ENCODE measurements at regions of chr17 and their contacts with region 1.

Region 1: DNA sequence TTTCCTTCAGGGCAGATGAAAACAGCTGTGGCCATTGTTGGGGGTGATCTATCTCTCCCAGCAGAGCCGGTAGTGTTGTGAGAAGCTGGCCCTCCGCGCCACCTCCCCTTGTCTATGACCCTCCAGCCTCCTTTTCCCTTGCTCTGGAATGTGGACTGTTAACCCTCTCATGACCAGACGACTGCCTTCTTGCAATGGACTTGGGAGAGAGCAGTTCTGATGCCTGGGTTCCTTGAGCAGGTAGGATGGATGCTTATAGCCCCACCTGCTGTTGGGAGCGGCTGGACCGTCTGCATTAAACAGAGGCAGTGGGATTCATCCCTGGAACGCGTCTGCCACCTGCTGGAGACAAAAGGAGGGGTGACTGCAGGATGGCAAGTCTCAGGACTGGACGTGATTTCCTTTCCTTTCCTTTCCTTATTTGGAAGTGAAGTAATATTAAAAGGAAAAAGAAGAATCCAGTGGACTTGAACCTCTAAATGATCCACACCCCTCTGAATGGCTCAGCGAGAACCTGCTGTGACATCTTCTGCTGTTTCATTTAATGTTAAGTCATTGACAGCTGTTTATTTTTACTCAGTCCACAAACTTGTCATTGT is 1.8 kb upstream of the SOST start:
- DNase-seq: peak; percentile 92
- H3K4me3 Mint-ChIP-seq: no peak overlapping the region
- H3K27ac Mint-ChIP-seq: no peak overlapping the region
- H3K4me1 Mint-ChIP-seq: peaks cover 1% of the 10 kb centered on the region
- H3K27me3 Mint-ChIP-seq: peaks cover 32% of the 10 kb centered on the region

Region 2: DNA sequence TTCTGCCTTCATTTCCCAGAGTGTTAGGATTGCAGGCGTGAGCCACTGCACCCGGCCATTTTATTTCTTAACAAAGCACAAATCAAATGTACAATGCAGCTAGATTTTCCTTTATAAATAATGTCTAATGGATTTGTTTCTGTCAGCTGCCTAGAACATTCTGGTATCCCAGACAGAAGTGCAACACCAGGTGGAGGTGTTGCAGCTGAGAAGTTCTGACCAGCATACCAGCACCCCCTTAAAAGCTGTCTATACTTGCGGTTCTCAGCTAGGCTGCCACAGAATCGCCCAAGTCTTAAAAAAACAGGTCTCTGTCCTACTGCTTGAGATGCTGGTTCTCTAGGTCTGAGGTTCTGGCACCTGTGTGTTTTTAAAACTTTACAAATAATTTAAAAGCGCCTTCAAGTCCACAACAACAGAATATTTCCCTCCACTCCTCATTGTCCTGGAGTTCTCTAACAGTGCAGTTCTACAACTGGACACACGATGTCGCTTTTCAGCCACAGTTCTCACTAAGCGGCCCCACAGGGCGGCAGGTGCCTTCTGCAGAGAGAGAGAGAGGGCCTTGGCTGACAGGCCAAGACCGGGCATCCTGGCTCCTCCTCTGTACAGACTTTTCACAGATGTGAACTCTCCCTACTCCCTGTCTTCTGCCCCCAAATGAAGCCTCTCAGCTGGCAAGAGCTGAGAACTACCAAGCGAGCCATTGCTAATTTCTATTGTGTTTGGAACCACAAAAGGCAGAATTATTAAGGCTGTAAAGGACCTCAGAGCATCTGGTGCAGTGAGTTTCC is 66.1 kb before region 1 on chr17:
- CTCF ChIA-PET with region 1: interaction called, 365 read pairs
- POLR2A ChIA-PET with region 1: interaction called, 11 read pairs
- DNase-seq: peak; percentile 79
- H3K4me3 Mint-ChIP-seq: no peak overlapping the region
- H3K27ac Mint-ChIP-seq: no peak overlapping the region
- H3K4me1 Mint-ChIP-seq: peaks cover 5% of the 10 kb centered on the region
- H3K27me3 Mint-ChIP-seq: peaks cover 12% of the 10 kb centered on the region

Region 3: DNA sequence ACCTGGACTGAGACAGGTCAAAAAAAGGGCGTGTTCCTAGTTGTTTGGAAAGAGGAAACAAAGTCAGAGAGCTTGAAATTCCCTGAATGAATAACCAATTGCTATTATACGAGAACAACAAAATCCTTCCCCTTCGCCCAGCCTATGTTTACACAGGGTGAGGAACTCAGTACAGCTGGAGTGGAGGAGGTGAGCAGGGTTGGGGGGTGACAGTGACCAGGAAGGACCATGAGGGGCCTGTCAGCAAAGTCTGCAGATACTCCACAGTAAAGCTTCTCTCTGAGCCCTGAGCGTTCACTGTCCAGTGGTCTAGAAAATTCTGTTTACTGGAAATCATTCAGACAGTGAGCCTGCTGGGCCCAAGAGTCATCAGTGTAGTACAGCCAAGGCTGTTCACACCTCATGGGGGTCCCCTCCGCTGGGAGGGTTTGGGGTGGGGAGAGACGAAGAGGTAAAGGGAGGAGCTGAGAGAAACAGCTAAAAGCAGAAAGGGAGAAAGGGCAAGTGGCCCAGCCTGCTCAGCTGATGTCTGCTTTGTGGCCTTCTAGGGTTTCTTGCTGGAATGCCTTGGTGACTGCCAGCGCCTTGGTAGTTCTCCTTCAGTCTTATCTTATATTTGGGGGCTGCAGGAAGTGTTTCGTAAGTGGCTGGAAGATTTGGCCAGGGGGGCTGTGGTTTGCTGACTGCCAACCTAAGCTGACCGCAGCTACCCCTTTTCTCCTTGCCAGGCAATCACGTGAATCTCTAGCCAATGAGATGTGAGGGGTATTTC is 12.7 kb after region 1 on chr17:
- CTCF ChIA-PET with region 1: interaction called, 22 read pairs
- POLR2A ChIA-PET with region 1: no interaction called
- DNase-seq: no peak
- H3K4me3 Mint-ChIP-seq: no peak overlapping the region
- H3K27ac Mint-ChIP-seq: no peak overlapping the region
- H3K4me1 Mint-ChIP-seq: peaks cover 2% of the 10 kb centered on the region
- H3K27me3 Mint-ChIP-seq: no peaks in the 10 kb centered on the region

Region 4: GRCh38 chr17:43832976-43833829 is 72.8 kb after region 1 on chr17 and contains the start of gene MPP3:
- CTCF ChIA-PET with region 1: no interaction called
- POLR2A ChIA-PET with region 1: no interaction called
- DNase-seq: peak; percentile 47
- H3K4me3 Mint-ChIP-seq: peak within 1 kb of the TSS; percentile 51
- H3K27ac Mint-ChIP-seq: no peak within 1 kb of the TSS
- H3K4me1 Mint-ChIP-seq: peaks cover 11% of the 10 kb centered on the region
- H3K27me3 Mint-ChIP-seq: peaks cover 49% of the 10 kb centered on the region
- total RNA-seq, gene MPP3: not detected